ENCODE measurements at regions of chr5 and their contacts with region 1.

Region 1: GRCh38 chr5:95781101-95781583 is 41.4 kb downstream of the GLRX start:
- DNase-seq: peak; percentile 81
- H3K4me3 Mint-ChIP-seq: peak overlapping the region; percentile 26
- H3K27ac Mint-ChIP-seq: no peak overlapping the region
- H3K4me1 Mint-ChIP-seq: peaks cover 4% of the 10 kb centered on the region
- H3K27me3 Mint-ChIP-seq: no peaks in the 10 kb centered on the region

Region 2: GRCh38 chr5:95725937-95726810 is 55.0 kb before region 1 on chr5:
- CTCF ChIA-PET with region 1: interaction called, 11 read pairs
- POLR2A ChIA-PET with region 1: no interaction called
- intact Hi-C with region 1: no loop called
- DNase-seq: no peak
- H3K4me3 Mint-ChIP-seq: no peak overlapping the region
- H3K27ac Mint-ChIP-seq: no peak overlapping the region
- H3K4me1 Mint-ChIP-seq: peaks cover 5% of the 10 kb centered on the region
- H3K27me3 Mint-ChIP-seq: peaks cover 17% of the 10 kb centered on the region

Region 3: DNA sequence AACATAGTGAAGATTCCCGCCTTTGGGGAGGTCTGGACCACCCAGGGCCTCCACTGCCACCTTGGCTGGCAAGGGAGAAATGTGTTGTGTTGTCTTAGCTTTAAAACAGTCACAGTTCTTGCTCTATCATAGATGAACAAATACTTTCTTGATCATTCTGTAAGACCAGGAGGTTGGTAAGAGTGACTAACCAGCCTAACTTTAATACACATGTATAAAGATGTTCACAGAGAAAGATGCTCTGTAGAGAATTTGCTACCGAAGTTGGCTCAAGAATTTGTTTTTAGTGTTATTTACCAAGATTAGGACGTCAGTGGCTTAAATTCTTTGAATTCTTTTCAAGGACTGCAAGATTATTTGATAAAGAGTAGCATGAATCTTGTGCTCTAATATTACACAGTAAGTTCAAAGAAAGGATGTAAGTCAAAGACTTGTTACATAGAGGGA is 13.0 kb after region 1 on chr5:
- CTCF ChIA-PET with region 1: interaction called, 46 read pairs
- POLR2A ChIA-PET with region 1: no interaction called
- intact Hi-C with region 1: no loop called
- DNase-seq: no peak
- H3K4me3 Mint-ChIP-seq: no peak overlapping the region
- H3K27ac Mint-ChIP-seq: no peak overlapping the region
- H3K4me1 Mint-ChIP-seq: no peaks in the 10 kb centered on the region
- H3K27me3 Mint-ChIP-seq: no peaks in the 10 kb centered on the region

Region 4: DNA sequence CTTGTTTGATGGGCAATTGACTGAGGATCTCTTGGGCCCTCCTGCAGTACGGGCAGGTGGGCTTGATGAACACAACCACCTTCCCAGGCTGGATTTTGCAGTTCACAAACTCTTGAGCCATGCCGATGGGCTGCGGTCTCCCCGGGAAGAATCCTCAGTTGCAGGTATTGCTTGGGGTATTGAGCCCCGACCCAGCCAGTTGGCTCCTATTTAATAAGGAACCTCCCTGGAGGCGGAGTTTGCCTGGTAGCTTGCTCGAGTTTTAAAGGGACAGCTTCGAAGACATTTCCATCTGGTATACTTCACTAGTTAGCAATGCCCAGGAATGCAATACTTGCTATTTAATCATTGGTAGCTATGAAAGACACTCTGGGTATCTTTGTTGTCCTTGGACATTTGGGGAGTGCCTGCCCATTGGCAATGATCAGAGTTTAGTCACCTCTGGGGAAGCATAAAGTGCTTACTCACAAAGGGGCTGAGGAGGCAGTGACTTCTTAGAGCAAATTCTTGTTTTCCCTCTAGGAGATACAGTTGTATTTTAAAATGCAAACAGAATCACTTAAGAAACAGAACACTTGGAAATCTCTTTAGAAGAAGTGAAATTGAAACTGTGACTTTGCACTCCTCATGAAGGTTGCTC is 41.5 kb after region 1 on chr5 and contains the start of gene GLRX:
- CTCF ChIA-PET with region 1: interaction called, 63 read pairs
- POLR2A ChIA-PET with region 1: no interaction called
- intact Hi-C with region 1: loop called (anchors 1 kb)
- DNase-seq: peak; percentile 61
- H3K4me3 Mint-ChIP-seq: peak within 1 kb of the TSS; percentile 94
- H3K27ac Mint-ChIP-seq: peak within 1 kb of the TSS; percentile 90
- H3K4me1 Mint-ChIP-seq: peaks cover 65% of the 10 kb centered on the region
- H3K27me3 Mint-ChIP-seq: no peaks in the 10 kb centered on the region
- total RNA-seq, gene GLRX: 33.2 to 34.0 TPM

Region 5: GRCh38 chr5:95858661-95859326 is 77.7 kb after region 1 on chr5:
- CTCF ChIA-PET with region 1: interaction called, 463 read pairs
- POLR2A ChIA-PET with region 1: no interaction called
- intact Hi-C with region 1: no loop called
- DNase-seq: peak; percentile 97
- H3K4me3 Mint-ChIP-seq: peak overlapping the region; percentile 40
- H3K27ac Mint-ChIP-seq: peak overlapping the region; percentile 68
- H3K4me1 Mint-ChIP-seq: peaks cover 55% of the 10 kb centered on the region
- H3K27me3 Mint-ChIP-seq: no peaks in the 10 kb centered on the region

Measured in activated CD4-positive, alpha-beta memory T cell treated with anti-CD3 and anti-CD28 coated beads for 36 hours (primary cell).